ENCODE measurements at regions of chr7 and their contacts with region 1.

Region 1: GRCh38 chr7:155344600-155345433 is 47.1 kb downstream of the INSIG1 start:
- DNase-seq: peak; percentile 46
- ATAC-seq: peak; percentile 96
- H3K4me3 ChIP-seq: peak overlapping the region; percentile 46 to 48
- H3K27ac ChIP-seq: no peak overlapping the region; the same call in 1 of the 2 replicates
- H3K4me1 ChIP-seq: peaks cover 6% of the 10 kb centered on the region; the same call in 1 of the 2 replicates
- H3K27me3 ChIP-seq: no peaks in the 10 kb centered on the region
- CTCF ChIP-seq: peak; percentile 99

Region 2: DNA sequence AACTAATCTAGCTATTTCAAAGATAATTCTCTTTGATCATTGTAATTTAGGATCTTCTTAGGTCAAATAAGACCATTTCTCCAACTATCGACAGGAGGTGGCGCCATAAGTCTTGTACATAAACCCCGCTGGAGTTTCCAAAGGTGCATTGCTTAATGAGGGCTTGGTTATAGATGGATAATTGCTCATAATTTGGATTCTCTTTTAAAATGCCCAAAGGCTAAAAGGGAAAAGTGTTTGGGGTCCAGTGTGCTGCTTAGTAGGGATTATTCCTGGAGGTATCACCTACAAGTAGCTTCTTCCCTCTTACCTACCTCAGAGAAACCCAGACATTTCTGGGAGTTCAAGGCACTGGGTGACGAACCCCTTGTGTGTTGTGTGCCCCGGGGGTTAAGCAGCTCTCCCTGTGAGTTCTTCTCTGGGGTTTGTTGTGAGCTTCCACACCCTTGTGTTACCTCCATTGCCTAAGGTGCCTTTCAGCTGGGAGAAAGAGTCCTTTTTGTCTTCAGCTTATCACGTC is 417.1 kb before region 1 on chr7:
- CTCF ChIA-PET with region 1: interaction called, 4 read pairs
- POLR2A ChIA-PET with region 1: no interaction called
- in situ Hi-C with region 1: no loop called
- intact Hi-C with region 1: loop called (anchors 5 kb)
- DNase-seq: peak; percentile 86
- ATAC-seq: peak; percentile 80
- H3K4me3 ChIP-seq: peak overlapping the region; percentile 73 to 95
- H3K27ac ChIP-seq: peak overlapping the region; percentile 89
- H3K4me1 ChIP-seq: peaks cover 6% of the 10 kb centered on the region; the same call in 1 of the 2 replicates
- H3K27me3 ChIP-seq: no peaks in the 10 kb centered on the region; the same call in 1 of the 2 replicates
- CTCF ChIP-seq: peak; percentile 74

Region 3: DNA sequence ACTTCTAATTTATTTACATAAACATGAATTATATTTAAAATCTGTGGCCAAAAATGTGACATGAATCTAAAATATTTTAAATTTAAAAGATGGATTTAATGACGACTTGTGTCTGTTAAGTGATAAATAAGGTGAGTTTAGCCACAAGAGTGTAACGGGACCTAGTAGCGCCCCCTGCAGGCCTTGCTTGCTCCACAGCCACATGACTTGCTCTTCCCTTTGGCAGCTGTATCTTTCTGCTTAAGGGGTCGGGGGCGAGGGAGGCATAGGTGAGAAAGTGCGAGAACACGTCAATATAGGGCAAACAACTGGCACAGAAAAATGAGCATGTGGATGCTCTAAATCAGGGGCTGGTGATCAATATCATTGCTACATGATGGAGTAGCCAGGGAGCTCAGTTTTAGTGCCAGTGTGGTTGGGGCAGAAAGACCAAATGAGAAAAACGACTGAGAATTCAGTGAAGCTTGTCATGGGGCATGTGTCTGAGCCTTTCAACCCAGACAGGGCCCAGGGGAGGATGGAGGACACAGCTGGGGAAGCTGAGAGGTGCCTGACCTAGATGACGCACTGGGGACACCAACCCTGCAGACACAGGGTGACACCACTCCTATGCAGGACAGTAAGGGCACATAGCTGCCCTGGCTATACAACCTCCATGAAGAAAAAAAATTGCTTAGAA is 391.7 kb before region 1 on chr7:
- CTCF ChIA-PET with region 1: no interaction called
- POLR2A ChIA-PET with region 1: interaction called, 11 read pairs
- in situ Hi-C with region 1: no loop called
- intact Hi-C with region 1: no loop called
- DNase-seq: peak; percentile 24
- ATAC-seq: peak; percentile 77; the same call in 1 of the 2 replicates
- H3K4me3 ChIP-seq: no peak overlapping the region
- H3K27ac ChIP-seq: no peak overlapping the region
- H3K4me1 ChIP-seq: no peaks in the 10 kb centered on the region
- H3K27me3 ChIP-seq: no peaks in the 10 kb centered on the region
- CTCF ChIP-seq: peak; percentile 89

Region 4: DNA sequence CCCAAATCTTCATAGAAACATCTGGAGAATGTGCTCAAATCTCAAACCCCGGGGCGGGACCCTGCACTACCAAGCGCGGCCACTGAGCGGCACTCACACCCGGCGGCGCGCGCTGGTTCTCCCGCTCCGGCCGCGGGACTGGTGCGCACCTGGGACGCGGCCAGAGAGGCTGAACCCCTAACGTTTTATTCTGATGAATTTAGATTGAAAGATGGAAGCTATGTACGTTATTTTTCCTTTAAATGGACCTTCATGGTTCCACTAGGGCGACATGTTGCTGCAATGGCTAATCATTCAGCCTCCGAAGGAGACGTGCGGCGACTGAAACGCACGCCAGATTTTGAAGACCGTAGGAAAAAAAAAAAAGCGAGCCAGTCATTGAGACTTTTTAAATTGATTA is 154.1 kb before region 1 on chr7:
- CTCF ChIA-PET with region 1: interaction called, 3 read pairs
- POLR2A ChIA-PET with region 1: no interaction called
- in situ Hi-C with region 1: no loop called
- intact Hi-C with region 1: loop called (anchors 2 kb)
- DNase-seq: no peak
- ATAC-seq: peak; percentile 80
- H3K4me3 ChIP-seq: peak overlapping the region; percentile 10 to 53
- H3K27ac ChIP-seq: no peak overlapping the region
- H3K4me1 ChIP-seq: no peaks in the 10 kb centered on the region
- H3K27me3 ChIP-seq: no peaks in the 10 kb centered on the region
- CTCF ChIP-seq: peak; percentile 97

Region 5: DNA sequence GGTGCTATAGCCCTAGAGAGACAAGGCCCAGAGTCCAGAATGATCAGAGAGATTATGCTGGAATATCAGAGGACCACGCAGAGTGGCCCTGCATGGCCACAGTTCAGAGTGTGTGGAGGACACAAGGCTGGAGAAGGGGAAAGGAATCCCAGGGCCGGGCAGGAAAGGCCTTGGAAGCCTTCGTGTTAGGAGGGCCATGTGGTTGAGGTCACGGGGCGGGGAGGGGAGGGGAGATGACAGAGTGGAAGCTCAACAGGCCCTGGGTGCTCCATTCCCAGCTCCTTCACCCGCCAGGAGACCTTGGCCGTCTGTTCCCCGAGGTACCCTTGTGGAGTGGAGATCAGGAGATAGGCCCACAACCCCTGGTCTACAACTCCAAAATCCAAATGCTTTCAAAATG is 99.9 kb after region 1 on chr7:
- CTCF ChIA-PET with region 1: interaction called, 11 read pairs
- POLR2A ChIA-PET with region 1: no interaction called
- in situ Hi-C with region 1: no loop called
- intact Hi-C with region 1: no loop called
- DNase-seq: no peak
- ATAC-seq: no peak
- H3K4me3 ChIP-seq: no peak overlapping the region
- H3K27ac ChIP-seq: no peak overlapping the region
- H3K4me1 ChIP-seq: peaks cover 6% of the 10 kb centered on the region; the same call in 1 of the 2 replicates
- H3K27me3 ChIP-seq: peaks cover 21% of the 10 kb centered on the region
- CTCF ChIP-seq: no peak

Measured in Panc1 (cell line).